ENCODE measurements at regions of chr1 and their contacts with region 1.

Region 1: GRCh38 chr1:221478050-221478949 is 263.6 kb downstream of the DUSP10 start:
- DNase-seq: peak; percentile 37
- CTCF ChIP-seq: peak; percentile 81

Region 2: GRCh38 chr1:221462345-221462744 is 16.0 kb before region 1 on chr1:
- CTCF ChIA-PET with region 1: interaction called, 11 read pairs
- POLR2A ChIA-PET with region 1: no interaction called
- DNase-seq: no peak
- CTCF ChIP-seq: no peak

Region 3: GRCh38 chr1:222171005-222171404 is 692.7 kb after region 1 on chr1:
- CTCF ChIA-PET with region 1: interaction called, 10 read pairs
- POLR2A ChIA-PET with region 1: no interaction called
- DNase-seq: peak; percentile 33
- CTCF ChIP-seq: peak; percentile 57